RWPE1 (cell line): ENCODE measurements at regions of chr10 and their contacts with region 1.

Region 1: DNA sequence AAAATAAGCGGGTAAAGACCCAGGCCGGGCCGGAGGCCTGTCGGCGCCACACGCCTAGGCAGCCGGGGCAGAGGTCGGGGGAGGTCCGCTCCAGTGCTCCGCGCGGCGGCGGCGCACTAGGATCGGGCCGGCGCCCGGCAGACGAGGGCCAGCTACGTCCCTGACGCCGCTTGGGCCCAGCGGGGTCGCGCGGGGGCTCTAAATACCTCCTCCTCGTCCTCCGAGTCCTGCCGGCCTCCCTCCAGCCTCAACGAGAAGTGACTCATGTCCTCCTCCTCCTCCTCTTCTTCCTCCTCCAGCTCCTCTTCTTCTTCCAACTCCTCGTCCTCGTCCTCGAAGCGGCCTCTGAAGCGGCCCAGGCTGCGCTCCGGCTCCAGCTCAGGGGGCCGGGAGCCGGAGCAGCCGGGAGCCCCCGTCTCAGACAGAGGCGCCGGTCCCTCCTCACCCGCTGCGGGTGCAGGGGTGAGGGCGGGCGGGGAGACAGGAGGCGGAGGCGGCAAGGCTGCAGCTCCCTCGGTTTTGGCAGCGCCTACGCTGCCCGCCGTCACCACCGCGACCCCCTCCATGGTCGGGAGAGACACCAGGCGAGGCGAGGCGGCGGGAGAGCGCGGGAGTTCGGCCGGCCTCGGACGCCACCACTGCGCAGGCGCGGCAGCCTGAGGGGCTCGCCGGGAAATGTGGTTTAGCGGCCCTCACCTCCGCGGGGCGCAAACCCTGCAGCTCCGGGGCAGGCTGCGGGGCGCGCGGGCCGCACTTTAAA is at the start of gene PCGF6:
- DNase-seq: peak; percentile 94
- H3K27ac ChIP-seq: peak within 1 kb of the TSS; percentile 77
- CTCF ChIP-seq: no peak

Region 2: DNA sequence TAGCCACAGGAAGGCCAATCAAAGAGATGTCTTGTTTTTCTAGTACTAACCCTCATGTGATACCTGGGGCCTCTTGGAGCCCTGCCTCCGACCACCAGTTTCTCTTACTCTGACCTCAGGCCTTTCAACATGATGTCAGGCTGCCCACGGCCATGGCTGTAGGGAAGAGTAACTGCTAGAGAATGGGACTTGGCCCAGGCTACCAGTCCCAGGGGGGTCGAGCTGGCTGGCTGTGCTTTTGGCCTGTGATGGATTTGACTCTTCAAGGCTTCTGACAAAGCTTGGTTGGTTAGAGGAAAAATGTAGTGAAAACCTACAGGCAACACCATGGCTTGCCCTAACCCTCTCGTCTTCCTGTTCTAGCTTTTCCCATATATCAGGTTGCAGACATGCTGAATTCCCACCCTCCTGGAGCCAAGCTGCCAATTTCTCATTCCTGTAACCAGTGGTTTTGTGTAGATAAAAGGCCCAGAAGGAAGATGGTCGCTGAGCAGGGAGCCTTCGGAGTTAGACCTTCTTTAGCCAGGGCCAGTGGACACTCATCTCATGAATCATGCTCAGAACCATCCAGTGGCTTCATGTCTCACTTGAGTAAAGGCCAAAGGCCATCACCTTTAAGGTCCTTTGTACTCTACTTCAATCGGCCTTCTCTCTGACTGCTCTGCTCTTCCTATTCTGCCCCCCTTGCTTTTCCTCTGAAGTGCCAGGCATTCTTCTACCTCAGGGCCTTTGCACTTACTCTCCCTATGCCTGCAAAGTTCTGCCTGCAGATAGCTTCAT is 827.2 kb before region 1 on chr10:
- CTCF ChIA-PET with region 1: no interaction called
- POLR2A ChIA-PET with region 1: no interaction called
- DNase-seq: no peak
- H3K27ac ChIP-seq: no peak overlapping the region
- CTCF ChIP-seq: no peak

Region 3: DNA sequence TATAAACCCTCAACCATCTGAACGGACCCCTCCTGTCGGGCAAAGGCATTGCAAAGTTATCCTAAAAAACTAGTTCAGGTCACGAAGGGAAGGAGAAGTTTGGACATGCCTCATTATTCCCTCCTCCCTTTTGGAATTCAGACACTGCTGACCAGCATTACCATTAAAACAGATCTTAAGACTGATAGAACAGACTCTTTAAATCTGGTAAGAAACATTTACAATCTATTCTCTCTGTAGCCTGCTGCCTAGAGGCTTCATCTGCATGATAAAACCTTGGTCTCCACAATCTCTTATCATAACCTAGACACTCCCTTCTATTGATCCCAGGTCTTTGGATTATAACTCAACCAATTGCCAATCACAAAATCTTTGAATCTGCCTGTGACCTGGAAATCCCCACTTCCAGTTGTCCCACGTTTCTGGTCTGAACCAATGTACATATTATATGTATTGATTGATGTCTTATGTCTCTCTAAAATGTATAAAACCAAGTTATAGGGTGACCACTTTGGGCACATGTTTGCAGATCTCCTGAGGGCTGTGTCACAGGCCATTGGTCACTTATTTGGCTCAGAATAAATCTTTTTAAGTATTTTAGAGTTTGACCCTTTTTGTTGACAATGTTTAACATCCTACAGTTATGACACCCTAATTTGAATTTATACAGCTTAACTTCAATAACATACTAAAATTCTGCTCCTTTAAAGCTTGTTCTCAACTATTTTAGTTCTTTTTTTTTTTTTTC is 456.0 kb before region 1 on chr10:
- CTCF ChIA-PET with region 1: no interaction called
- POLR2A ChIA-PET with region 1: interaction called, 13 read pairs
- DNase-seq: no peak
- H3K27ac ChIP-seq: no peak overlapping the region
- CTCF ChIP-seq: no peak

Region 4: DNA sequence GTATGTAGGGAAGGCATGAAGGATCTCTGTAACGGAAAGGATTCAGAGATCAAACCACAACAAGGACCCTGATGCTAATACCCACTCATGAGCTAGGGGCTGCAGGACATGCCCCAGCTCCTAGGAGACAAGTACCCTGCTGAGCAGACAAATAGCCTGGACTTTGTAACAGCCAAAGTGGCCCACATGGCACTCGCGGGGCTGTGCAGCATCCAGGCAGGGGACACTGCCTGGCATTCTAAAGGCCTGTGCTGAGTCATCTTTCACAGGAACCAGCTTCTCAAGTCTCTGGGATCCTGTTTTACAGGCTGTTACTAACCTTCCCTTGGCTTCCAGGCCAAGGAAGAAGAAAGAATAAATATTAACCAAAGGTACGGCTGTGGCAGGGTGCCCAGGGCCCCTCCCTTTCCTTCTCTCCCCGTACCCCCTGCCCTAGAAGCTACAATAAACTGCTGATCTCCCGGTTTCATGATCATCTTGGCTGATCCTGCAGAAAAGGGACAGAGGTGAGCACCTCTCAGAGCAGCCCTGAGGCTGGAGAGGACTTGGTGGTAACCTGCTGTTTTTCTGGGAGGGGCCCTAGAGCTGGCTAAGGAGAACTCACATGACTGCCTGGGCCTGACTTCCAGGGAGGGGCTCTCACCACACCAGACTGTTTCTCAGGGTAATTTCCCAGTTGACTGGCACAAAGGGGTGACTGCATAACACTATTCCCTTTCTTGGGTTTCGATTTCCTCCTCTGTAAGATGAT is 109.2 kb before region 1 on chr10:
- CTCF ChIA-PET with region 1: no interaction called
- POLR2A ChIA-PET with region 1: no interaction called
- DNase-seq: peak; percentile 86
- H3K27ac ChIP-seq: peak overlapping the region; percentile 89
- CTCF ChIP-seq: no peak